AG04450 (cell line): ENCODE measurements at regions of chr22 and their contacts with region 1.

Region 1: GRCh38 chr22:50673231-50674129 is 857 bp downstream of the SHANK3 start:
- DNase-seq: no peak
- H3K4me3 ChIP-seq: no peak overlapping the region
- H3K27ac ChIP-seq: no peak overlapping the region
- H3K27me3 ChIP-seq: peaks cover 48% of the 10 kb centered on the region
- CTCF ChIP-seq: no peak

Region 2: DNA sequence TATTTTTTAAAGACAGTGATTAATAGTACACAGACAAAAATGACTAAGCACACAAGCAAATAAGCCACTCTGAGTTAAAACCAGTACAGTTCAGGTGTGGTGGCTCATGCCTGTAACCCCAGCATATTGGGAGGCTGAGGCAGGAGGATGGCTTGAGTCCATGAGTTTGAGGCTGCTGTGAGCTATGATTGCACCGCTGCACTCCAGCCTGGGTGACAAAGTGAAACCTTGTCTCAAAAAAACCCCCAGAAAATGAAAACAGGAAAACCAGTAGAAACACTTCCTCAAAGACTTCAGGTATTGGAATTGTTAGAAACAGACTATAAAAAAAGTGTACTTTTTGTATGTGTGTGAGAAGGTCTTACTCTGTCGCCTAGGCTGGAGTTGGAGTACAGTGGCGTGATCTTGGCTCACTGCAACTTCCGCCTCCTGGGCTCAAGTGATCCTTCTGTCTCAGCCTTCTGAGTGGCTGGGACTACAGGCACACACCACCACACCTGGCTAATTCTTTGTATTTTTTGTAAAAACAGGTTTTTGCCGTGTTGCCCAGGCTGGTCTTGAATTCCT is 297.3 kb before region 1 on chr22:
- CTCF ChIA-PET with region 1: no interaction called
- POLR2A ChIA-PET with region 1: interaction called, 13 read pairs
- DNase-seq: no peak
- H3K4me3 ChIP-seq: no peak overlapping the region
- H3K27ac ChIP-seq: no peak overlapping the region
- H3K27me3 ChIP-seq: no peaks in the 10 kb centered on the region
- CTCF ChIP-seq: no peak

Region 3: GRCh38 chr22:50656122-50657070 is 17.1 kb before region 1 on chr22:
- CTCF ChIA-PET with region 1: no interaction called
- POLR2A ChIA-PET with region 1: no interaction called
- DNase-seq: no peak
- H3K4me3 ChIP-seq: no peak overlapping the region
- H3K27ac ChIP-seq: no peak overlapping the region
- H3K27me3 ChIP-seq: no peaks in the 10 kb centered on the region
- CTCF ChIP-seq: no peak

Region 4: DNA sequence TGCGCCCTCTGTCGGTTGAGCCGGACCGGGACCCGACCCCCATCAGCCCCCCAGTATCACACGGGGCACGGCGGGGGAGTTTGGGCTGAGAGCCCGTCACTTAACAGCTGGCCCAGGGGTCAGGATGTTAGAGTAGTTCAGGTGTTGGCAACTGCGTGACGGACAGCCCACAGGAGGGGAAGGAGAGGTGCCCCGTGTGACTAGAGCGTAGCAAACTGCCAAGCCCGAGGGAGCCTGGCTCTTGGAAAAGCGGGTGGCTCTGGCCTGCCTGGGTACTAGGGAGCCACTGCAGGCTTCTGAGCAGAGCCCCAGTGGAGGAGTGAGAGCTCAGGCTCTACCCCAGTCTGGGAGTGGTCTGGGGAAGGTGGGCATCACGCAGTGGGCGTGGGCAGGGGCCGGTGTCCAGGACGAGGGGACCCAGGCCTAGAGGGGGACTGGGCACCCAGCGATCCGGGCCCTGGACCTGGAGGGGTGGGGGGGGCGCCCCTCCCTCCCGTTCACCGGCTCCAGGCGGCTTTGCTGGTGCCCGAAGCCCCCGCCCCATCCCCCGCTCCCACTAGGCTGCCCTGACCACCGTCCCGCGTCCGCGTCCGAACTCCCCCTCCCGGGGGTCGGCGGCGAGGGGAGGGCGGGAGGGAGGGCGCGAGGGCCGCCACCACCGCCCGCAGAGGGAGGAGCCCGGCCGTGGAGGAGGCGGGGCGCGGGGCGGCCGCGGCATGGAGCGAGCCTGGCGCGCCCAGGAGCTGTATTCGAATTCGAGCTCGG is 23.5 kb after region 1 on chr22:
- CTCF ChIA-PET with region 1: no interaction called
- POLR2A ChIA-PET with region 1: no interaction called
- DNase-seq: no peak
- H3K4me3 ChIP-seq: peak overlapping the region; percentile 62
- H3K27ac ChIP-seq: no peak overlapping the region
- H3K27me3 ChIP-seq: peaks cover 18% of the 10 kb centered on the region
- CTCF ChIP-seq: peak; percentile 68